B cell (primary cell): ENCODE measurements at regions of chr6 and their contacts with region 1.

Region 1: GRCh38 chr6:149484733-149485700 is at the start of gene ZC3H12D:
- DNase-seq: peak; percentile 88
- ATAC-seq: peak; percentile 54
- H3K4me3 ChIP-seq: peak within 1 kb of the TSS; percentile 55 to 77 (median 71)
- H3K4me3 Mint-ChIP-seq: peak within 1 kb of the TSS; percentile 94
- H3K27ac ChIP-seq: peak within 1 kb of the TSS; percentile 94 to 98
- H3K27ac Mint-ChIP-seq: peak within 1 kb of the TSS; percentile 99
- H3K4me1 ChIP-seq: peaks cover 78 to 91% of the 10 kb centered on the region in 2 donors
- H3K4me1 Mint-ChIP-seq: peaks cover 77% of the 10 kb centered on the region
- H3K27me3 ChIP-seq: no peaks in the 10 kb centered on the region
- H3K27me3 Mint-ChIP-seq: no peaks in the 10 kb centered on the region
- CTCF ChIP-seq: peak; percentile 70
- total RNA-seq, gene ZC3H12D: 190 and 215 TPM in 2 replicates

Region 2: DNA sequence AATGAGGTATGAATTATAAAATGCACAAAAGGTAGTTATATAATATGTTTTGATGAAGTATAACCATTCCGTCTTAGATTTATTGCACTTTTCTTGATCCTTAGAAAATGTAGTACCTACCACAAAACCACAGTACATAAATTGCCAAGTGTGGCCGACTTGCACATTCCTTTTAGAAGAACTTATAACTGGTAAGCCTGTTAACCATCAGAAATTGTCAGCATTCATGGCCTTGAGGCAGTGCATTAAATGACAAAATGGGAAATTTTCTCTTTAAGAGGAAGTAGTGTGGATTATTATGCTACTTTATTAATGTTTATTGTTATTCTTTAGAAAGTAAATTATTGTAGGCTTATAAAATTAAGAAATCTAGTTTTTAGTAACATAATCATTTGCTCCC is 137.9 kb before region 1 on chr6:
- CTCF ChIA-PET with region 1: no interaction called
- POLR2A ChIA-PET with region 1: no interaction called
- intact Hi-C with region 1: no loop called
- DNase-seq: no peak
- ATAC-seq: no peak
- H3K4me3 ChIP-seq: no peak overlapping the region
- H3K4me3 Mint-ChIP-seq: no peak overlapping the region
- H3K27ac ChIP-seq: no peak overlapping the region
- H3K27ac Mint-ChIP-seq: no peak overlapping the region
- H3K4me1 ChIP-seq: peaks cover 11 to 17% of the 10 kb centered on the region in 2 donors
- H3K4me1 Mint-ChIP-seq: peaks cover 52% of the 10 kb centered on the region
- H3K27me3 ChIP-seq: no peaks in the 10 kb centered on the region
- H3K27me3 Mint-ChIP-seq: no peaks in the 10 kb centered on the region
- CTCF ChIP-seq: no peak

Region 3: DNA sequence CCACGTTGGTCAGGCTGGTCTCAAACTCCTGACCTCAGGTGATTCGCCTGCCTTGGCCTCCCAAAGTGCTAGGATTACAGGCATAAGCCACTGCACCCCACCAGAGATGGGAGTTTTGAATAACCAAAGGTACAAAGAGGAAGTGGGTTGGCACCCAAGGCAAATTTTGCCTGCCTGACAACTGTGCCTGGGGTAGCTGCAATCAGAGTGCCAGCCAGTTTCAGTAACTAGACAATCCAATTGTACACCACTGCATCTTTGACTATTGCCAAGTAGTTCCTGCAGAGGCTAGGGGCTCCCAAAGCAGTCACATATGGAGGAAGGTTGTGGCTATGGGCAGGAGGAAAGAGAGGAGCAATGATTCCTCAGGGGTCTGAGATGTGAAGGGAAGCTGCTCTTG is 16.8 kb before region 1 on chr6:
- CTCF ChIA-PET with region 1: interaction called, 35 read pairs
- POLR2A ChIA-PET with region 1: interaction called, 12 read pairs
- intact Hi-C with region 1: no loop called
- DNase-seq: peak; percentile 79
- ATAC-seq: peak; percentile 48
- H3K4me3 ChIP-seq: peak overlapping the region; percentile 21 to 67 (median 40)
- H3K4me3 Mint-ChIP-seq: peak overlapping the region; percentile 88
- H3K27ac ChIP-seq: peak overlapping the region; percentile 90 to 97
- H3K27ac Mint-ChIP-seq: peak overlapping the region; percentile 95
- H3K4me1 ChIP-seq: peaks cover 93 to 100% of the 10 kb centered on the region in 2 donors
- H3K4me1 Mint-ChIP-seq: peaks cover 90% of the 10 kb centered on the region
- H3K27me3 ChIP-seq: no peaks in the 10 kb centered on the region
- H3K27me3 Mint-ChIP-seq: no peaks in the 10 kb centered on the region
- CTCF ChIP-seq: no peak

Region 4: GRCh38 chr6:149473080-149474052 is 11.7 kb before region 1 on chr6:
- CTCF ChIA-PET with region 1: interaction called, 35 read pairs
- POLR2A ChIA-PET with region 1: interaction called, 12 read pairs
- intact Hi-C with region 1: no loop called
- DNase-seq: peak; percentile 65
- ATAC-seq: peak; percentile 34
- H3K4me3 ChIP-seq: peak overlapping the region in 4 of 5 experiments; percentile 5 to 55 (median 38)
- H3K4me3 Mint-ChIP-seq: peak overlapping the region; percentile 89
- H3K27ac ChIP-seq: peak overlapping the region; percentile 67 to 84
- H3K27ac Mint-ChIP-seq: peak overlapping the region; percentile 94
- H3K4me1 ChIP-seq: peaks cover 87 to 98% of the 10 kb centered on the region in 2 donors
- H3K4me1 Mint-ChIP-seq: peaks cover 84% of the 10 kb centered on the region
- H3K27me3 ChIP-seq: no peaks in the 10 kb centered on the region
- H3K27me3 Mint-ChIP-seq: no peaks in the 10 kb centered on the region
- CTCF ChIP-seq: peak; percentile 48

Region 5: GRCh38 chr6:149499066-149499465 is 14.0 kb after region 1 on chr6:
- CTCF ChIA-PET with region 1: interaction called, 11 read pairs
- POLR2A ChIA-PET with region 1: no interaction called
- intact Hi-C with region 1: loop called (anchors 1 kb)
- DNase-seq: no peak
- ATAC-seq: no peak
- H3K4me3 ChIP-seq: no peak overlapping the region
- H3K4me3 Mint-ChIP-seq: no peak overlapping the region
- H3K27ac ChIP-seq: peak overlapping the region in 1 of 2 donors; percentile 21
- H3K27ac Mint-ChIP-seq: peak overlapping the region; percentile 74
- H3K4me1 ChIP-seq: peaks cover 26 to 27% of the 10 kb centered on the region in 2 donors
- H3K4me1 Mint-ChIP-seq: peaks cover 55% of the 10 kb centered on the region
- H3K27me3 ChIP-seq: no peaks in the 10 kb centered on the region
- H3K27me3 Mint-ChIP-seq: no peaks in the 10 kb centered on the region
- CTCF ChIP-seq: no peak

Region 6: DNA sequence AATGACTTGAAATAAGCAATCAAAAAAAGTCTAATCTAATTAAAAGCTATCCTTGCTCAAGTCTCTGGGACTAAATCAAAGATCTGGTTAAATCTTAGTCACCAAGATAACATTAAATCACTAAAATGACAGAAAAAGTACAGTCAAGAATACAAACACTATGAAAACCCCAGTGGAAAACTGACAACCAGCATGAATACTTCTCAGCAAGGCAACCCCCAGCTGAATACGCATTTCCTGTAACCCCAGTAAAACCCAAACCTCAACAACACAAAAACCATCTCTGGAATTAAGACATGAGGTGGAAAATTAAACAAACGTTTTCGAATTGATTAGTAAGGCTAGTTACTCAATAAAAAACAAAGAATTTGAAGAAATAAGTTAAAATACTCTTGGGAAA is 23.5 kb after region 1 on chr6:
- CTCF ChIA-PET with region 1: interaction called, 12 read pairs
- POLR2A ChIA-PET with region 1: interaction called, 10 read pairs
- intact Hi-C with region 1: no loop called
- DNase-seq: no peak
- ATAC-seq: no peak
- H3K4me3 ChIP-seq: no peak overlapping the region
- H3K4me3 Mint-ChIP-seq: no peak overlapping the region
- H3K27ac ChIP-seq: no peak overlapping the region
- H3K27ac Mint-ChIP-seq: peak overlapping the region; percentile 41
- H3K4me1 ChIP-seq: no peaks in the 10 kb centered on the region
- H3K4me1 Mint-ChIP-seq: peaks cover 14% of the 10 kb centered on the region
- H3K27me3 ChIP-seq: no peaks in the 10 kb centered on the region
- H3K27me3 Mint-ChIP-seq: no peaks in the 10 kb centered on the region
- CTCF ChIP-seq: no peak